Ascending aorta (tissue), 2 donors: ENCODE measurements at regions of chr10 and their contacts with region 1.

Region 1: DNA sequence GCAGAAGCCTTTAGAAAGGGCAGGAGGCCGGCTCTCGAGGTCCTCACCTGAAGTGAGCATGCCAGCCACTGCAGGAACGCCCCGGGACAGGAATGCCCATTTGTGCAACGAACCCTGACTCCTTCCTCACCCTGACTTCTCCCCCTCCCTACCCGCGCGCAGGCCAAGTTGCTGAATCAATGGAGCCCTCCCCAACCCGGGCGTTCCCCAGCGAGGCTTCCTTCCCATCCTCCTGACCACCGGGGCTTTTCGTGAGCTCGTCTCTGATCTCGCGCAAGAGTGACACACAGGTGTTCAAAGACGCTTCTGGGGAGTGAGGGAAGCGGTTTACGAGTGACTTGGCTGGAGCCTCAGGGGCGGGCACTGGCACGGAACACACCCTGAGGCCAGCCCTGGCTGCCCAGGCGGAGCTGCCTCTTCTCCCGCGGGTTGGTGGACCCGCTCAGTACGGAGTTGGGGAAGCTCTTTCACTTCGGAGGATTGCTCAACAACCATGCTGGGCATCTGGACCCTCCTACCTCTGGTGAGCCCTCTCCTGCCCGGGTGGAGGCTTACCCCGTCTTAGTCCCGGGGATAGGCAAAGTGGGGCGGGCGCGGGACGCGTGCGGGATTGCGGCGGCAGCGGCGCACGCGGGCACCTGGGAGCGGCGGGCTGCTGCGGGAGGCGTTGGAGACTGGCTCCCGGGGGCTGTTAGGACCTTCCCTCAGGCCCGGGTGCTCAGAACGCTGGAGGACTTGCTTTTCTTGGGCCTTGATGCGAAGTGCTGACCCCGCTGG is at the start of gene FAS:
- DNase-seq: peak; percentile 42 to 87
- H3K4me3 ChIP-seq: peak within 1 kb of the TSS; percentile 88 to 95
- H3K27ac ChIP-seq: peak within 1 kb of the TSS; percentile 94 to 95
- H3K4me1 ChIP-seq: peaks cover 0 to 35% of the 10 kb centered on the region in 2 donors
- H3K27me3 ChIP-seq: no peaks in the 10 kb centered on the region
- CTCF ChIP-seq: no peak
- total RNA-seq, gene FAS: 10.5 TPM

Region 2: DNA sequence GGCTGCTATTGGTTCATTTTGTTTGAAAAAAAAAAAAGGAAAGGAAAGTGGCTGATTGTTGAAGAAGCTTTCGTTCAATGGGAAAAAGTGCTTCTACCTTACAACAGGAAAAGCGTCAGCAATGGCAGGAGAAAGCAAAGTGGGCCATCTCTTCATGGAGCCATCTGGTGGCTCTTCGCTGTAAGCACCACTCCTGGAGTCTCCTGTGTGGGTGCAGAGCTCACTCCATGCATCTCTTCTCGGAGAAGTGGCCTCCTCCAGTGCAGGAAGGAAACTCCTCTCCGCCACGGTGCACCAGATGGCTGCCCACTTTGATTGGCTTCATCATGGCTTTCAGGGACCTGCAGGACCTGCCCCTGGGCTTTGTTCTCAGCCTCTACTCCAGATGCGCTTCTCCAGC is 876.2 kb before region 1 on chr10:
- intact Hi-C with region 1: loop called (anchors 5 kb)
- DNase-seq: no peak
- H3K4me3 ChIP-seq: no peak overlapping the region
- H3K27ac ChIP-seq: no peak overlapping the region
- H3K4me1 ChIP-seq: peaks cover 4 to 11% of the 10 kb centered on the region in 2 donors
- H3K27me3 ChIP-seq: no peaks in the 10 kb centered on the region
- CTCF ChIP-seq: peak; percentile 15 to 55 (median 46)

Region 3: DNA sequence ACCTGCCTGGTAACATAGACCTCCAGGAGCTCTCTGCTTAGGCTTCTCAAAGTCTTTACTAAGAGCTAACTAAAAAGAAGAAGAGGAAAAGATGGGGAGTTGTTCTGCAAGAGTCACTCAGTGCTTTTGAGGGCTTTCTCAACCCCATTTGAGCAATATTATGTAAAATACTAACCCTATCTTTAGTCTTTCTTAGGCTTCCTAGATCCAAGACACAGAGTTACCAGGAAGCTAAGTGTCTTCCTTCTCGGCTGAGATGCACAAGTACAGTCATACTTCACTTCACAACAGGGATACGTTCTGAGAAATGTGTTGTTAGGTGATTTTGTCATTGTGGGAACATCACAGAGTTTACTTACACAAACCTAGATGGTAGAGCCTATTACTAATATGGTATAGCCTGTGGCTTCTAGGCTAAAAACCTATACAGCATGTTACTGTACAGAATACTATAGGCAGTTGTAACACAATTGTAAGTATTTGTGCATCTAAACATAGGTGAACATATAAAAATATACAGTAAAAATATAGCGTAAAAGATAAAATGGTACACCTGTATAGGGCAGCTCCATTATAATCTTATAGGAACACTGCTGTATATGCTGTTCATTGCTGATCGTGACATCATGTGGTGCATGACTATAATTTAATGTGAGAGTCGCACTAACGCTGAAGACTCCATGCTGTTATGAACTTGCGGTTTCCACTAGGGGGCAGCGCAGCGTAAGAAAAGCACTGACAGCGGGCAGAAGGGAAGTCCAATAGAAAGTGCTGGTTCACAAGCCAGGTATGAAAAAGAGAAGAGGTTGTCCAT is 155.3 kb before region 1 on chr10:
- intact Hi-C with region 1: loop called (anchors 5 kb)
- DNase-seq: peak in 1 of 2 donors; percentile 90
- H3K4me3 ChIP-seq: no peak overlapping the region
- H3K27ac ChIP-seq: no peak overlapping the region
- H3K4me1 ChIP-seq: peaks cover 0 to 3% of the 10 kb centered on the region in 2 donors
- H3K27me3 ChIP-seq: no peaks in the 10 kb centered on the region
- CTCF ChIP-seq: peak; percentile 83 to 85 (median 84)

Region 4: DNA sequence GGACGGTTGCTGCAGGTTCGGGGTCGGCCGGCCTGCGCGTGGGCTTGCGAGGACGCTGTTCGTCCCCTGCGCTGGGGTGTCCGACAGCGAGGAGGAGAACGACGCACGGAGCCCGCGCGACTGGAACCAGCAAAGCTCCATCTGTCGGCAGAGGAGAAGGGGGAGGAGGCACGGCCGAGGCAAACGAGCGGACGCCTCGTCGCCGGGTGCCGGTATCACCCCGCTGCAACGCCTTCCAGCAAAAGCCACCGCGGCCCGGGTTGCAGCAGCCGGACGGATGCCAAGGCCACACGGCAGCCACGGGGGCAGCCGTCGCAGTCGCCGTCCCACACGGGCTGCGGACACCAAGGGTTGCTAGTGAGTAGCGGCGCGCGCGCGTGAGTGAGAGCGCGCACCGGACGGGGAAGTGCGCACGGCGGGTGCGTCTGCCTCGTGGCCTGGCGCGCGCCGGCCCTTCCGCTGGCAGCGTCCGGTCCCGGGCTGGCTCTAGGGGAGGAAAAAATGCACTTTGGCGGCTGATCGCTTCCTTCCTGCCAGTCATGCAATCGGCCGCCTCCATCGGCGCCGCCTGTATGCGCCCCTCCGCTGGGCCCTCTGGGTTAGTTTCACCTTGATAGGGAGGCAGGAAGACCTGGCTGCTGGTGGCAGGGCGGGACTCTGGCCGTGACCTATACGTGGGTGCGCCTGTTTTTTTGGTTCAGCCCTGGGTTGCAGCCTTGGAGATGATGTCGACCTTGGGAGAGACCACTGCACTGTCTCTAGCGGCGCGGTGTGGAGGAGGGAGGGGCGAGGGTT is 110.1 kb before region 1 on chr10:
- intact Hi-C with region 1: loop called (anchors 5 kb)
- DNase-seq: peak; percentile 27 to 90
- H3K4me3 ChIP-seq: peak overlapping the region; percentile 81 to 90
- H3K27ac ChIP-seq: peak overlapping the region; percentile 76 to 85
- H3K4me1 ChIP-seq: peaks cover 0 to 12% of the 10 kb centered on the region in 2 donors
- H3K27me3 ChIP-seq: no peaks in the 10 kb centered on the region
- CTCF ChIP-seq: no peak

Region 5: DNA sequence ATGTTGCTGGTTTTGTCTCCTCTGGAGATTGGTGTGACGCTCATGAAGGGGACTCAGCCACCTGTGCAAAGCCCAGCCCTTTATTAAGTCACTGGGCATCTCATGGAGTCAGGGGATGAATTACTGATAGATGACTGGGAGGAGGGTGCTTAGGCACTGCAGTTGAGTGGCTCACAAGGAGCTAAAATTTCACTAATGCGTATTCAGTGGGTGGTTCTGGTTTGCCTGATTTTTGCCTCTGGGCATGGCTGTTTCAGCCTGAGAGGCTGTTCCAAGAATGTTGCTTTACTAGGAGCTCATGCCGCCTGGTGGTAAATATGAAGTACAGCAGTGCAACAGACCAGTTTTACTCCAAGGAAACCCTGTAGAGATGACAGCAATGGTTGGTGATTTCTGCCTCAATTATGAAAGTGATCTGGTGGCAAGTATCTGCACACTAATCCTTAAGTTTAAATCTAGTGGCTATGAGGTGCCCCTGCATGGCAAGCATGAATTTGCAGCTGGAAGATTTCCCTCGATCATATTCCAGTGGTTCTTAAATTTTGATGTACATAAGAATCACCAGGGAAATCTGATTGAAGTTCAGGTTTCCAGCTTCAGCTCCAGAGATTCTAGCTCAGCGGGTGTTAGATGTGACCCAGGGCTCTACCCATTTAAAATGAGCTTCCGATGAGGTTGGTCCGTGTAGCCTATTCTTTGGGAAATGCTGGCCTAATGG is 57.9 kb before region 1 on chr10:
- intact Hi-C with region 1: loop called (anchors 1 kb)
- DNase-seq: peak; percentile 41 to 87
- H3K4me3 ChIP-seq: no peak overlapping the region
- H3K27ac ChIP-seq: peak overlapping the region; percentile 72 to 88
- H3K4me1 ChIP-seq: peaks cover 0 to 7% of the 10 kb centered on the region in 2 donors
- H3K27me3 ChIP-seq: no peaks in the 10 kb centered on the region
- CTCF ChIP-seq: peak; percentile 82 to 90 (median 89)

Region 6: GRCh38 chr10:89643431-89644331 is 653.1 kb after region 1 on chr10:
- intact Hi-C with region 1: loop called (anchors 5 kb)
- DNase-seq: peak; percentile 61 to 89
- H3K4me3 ChIP-seq: peak overlapping the region; percentile 92 to 97
- H3K27ac ChIP-seq: peak overlapping the region; percentile 72 to 91
- H3K4me1 ChIP-seq: no peaks in the 10 kb centered on the region
- H3K27me3 ChIP-seq: no peaks in the 10 kb centered on the region
- CTCF ChIP-seq: no peak